ENCODE measurements at regions of chr2 and their contacts with region 1.

Region 1: GRCh38 chr2:201396595-201396994 is 39.5 kb upstream of the FLACC1 start:
- DNase-seq: no peak
- ATAC-seq: no peak

Region 2: DNA sequence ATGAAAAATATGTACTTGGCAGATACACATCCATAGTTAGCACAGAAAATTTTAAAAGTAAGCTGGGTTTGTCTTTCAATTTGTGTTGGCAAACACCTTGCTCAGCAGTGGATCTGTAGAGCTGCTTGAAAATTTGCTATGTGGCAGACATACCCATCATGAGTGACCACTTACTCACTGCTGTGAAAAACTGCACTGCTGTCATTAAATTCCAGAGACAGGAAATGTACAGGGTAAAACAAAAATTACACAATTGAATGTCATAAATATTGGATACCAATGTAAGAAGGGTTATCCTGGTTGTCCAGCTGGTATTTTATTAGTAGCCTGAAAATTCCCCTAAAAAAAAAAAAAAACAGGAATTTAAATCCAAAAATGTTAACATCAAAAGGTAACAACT is 482.9 kb before region 1 on chr2:
- intact Hi-C with region 1: loop called (anchors 10 kb)
- DNase-seq: no peak
- ATAC-seq: no peak

Region 3: GRCh38 chr2:201715483-201715882 is 318.9 kb after region 1 on chr2:
- intact Hi-C with region 1: loop called (anchors 10 kb)
- DNase-seq: no peak
- ATAC-seq: no peak